Activated naive CD4-positive, alpha-beta T cell treated with anti-CD3 and anti-CD28 coated beads for 36 hours (primary cell): ENCODE measurements at regions of chr18 and their contacts with region 1.

Region 1: DNA sequence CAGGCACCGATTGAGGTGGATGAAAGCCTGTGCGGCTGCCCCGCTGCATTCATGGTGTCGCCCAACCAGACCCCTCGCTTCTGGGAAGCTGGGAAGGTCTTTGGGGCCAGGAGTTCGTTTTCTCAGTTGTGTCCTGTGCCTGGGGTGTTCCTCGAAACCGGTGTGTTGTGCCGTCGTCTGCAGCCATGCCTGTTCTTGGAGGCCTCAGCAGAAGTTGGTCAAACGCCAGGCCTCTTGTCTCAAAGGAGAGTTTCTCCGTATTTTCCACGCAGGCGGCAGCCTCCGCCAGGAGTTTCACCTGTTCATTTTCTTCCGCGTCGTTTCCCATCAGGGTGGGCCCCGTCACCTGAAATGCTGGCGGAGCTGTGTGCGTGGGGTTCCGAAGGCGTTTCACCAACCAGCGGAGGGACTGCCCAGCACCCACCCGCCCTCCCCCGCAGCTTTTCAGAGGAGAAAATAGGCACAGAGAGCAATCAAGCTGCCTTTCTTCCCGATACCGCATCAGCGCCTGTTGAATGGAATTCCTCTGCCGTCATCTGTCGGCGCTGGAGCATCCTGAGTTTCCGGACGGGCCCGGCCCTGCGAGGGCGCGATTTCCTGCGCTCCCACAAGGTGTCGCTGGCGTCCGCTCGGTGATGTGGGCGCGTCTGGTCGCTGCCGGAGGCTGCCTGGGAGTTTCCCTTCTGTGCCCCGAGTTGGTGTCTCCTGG is 17.0 kb upstream of the NFATC1 start:
- DNase-seq: peak; percentile 91
- H3K4me3 Mint-ChIP-seq: no peak overlapping the region
- H3K27ac Mint-ChIP-seq: no peak overlapping the region
- H3K4me1 Mint-ChIP-seq: peaks cover 9% of the 10 kb centered on the region
- H3K27me3 Mint-ChIP-seq: no peaks in the 10 kb centered on the region

Region 2: DNA sequence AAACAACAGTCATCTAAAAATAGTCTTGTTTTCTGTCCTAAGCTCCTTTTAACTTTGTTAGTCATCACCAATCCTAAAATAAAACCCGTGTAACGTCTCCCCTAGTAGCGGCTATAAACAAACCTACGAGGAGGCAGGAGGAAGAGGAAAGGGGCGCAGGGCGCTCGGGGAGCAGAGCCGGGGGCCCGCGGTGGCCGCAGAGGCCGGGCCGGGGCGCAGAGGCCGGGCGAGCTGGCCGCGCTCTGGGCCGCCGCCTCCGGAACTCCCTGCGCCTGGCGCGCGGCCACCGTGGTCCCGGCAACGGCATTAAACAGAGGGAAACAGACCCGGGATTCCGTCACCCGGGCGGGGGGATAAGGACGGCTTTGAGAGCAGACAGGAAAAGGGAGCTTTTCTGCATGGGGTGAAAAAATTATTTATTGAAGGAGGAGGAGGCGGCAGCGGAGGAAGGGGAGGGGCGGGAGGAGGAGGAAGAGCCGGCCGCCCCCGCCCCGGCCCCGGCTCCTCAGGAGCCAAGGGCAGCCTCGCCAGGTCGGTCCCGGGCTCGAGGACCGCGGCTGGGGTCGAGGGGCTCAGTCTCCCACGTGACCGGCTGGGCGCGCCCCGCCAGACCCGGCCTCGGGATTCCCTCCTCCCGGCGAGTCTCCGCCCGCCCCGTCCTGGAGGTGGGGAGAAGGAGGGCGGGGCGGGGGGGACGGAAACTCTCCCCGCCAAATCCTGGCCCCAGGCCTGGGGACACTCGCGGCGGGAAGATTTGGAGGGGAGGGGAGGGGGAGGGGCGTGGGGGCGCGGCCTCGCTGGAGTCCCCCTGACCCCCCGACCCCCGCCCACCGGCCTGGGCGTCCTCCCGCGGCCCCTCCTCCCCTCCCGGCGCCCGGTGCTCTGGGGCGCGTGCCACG is 15.2 kb after region 1 on chr18:
- CTCF ChIA-PET with region 1: interaction called, 57 read pairs
- intact Hi-C with region 1: loop called (anchors 1 kb)
- DNase-seq: peak; percentile 73
- H3K4me3 Mint-ChIP-seq: peak overlapping the region; percentile 74
- H3K27ac Mint-ChIP-seq: peak overlapping the region; percentile 71
- H3K4me1 Mint-ChIP-seq: peaks cover 34% of the 10 kb centered on the region
- H3K27me3 Mint-ChIP-seq: peaks cover 5% of the 10 kb centered on the region

Region 3: DNA sequence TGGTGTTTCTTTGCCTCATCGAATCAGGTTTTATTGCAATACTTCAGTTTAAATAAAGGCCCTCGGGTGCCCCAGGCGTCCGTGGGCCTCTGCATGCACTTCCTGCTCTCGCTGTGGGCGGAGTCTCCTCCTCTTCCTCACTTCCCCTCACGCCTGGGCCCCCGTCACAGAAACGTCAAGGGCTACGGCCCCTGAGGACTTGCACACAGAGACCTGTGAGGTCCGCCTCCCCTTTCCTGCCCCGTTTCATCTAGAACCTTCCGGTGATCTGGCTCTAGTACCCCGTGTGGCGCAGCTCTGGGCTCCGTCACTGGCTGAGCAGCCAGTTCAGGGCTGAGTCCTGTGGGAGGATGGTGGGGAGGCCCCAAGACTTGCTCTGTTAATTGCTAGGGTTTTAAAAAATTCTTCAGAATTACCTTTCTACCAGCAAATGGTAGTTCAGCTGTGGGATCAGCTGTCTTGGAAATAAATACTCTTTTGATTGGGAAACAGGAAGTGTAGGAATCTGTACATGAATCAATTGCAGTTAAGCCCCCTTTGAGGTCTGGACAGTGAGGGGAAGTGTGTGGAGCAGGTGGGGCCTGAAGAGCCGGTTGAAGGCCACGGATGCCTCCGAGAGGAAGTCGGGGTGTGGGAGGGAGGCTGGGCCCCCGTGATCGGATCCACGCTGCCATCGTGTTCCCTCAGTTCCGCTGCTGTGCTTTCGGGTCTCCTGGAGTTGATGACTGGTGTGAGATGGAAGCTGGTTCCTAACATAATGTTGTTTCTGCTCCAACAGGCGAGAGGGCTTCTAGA is 27.3 kb after region 1 on chr18:
- CTCF ChIA-PET with region 1: interaction called, 11 read pairs
- intact Hi-C with region 1: no loop called
- DNase-seq: peak; percentile 96
- H3K4me3 Mint-ChIP-seq: peak overlapping the region; percentile 81
- H3K27ac Mint-ChIP-seq: peak overlapping the region; percentile 94
- H3K4me1 Mint-ChIP-seq: peaks cover 63% of the 10 kb centered on the region
- H3K27me3 Mint-ChIP-seq: no peaks in the 10 kb centered on the region

Region 4: DNA sequence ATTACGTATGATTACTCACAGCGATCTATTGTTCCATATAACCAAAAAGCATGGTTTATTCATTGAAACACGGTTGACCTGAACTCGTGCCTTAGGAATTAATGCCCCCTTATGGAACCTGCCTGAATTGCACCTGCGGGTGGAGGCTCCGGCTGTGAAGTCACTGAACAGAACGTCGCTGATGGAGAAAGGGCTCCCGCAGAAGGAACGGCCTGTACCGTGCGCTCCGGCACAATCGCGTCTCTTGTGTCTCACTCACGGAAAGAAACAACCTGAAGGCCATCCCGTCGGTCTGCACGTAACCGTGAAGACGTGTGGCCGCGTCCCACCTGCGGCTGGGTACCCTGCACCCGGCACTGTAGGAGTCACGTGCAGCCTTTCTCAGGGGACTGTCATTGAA is 150.2 kb after region 1 on chr18:
- CTCF ChIA-PET with region 1: interaction called, 89 read pairs
- intact Hi-C with region 1: loop called (anchors 1 kb)
- DNase-seq: peak; percentile 90
- H3K4me3 Mint-ChIP-seq: no peak overlapping the region
- H3K27ac Mint-ChIP-seq: no peak overlapping the region
- H3K4me1 Mint-ChIP-seq: peaks cover 32% of the 10 kb centered on the region
- H3K27me3 Mint-ChIP-seq: no peaks in the 10 kb centered on the region

Region 5: GRCh38 chr18:79644006-79644665 is 265.4 kb after region 1 on chr18:
- CTCF ChIA-PET with region 1: interaction called, 63 read pairs
- intact Hi-C with region 1: loop called (anchors 1 kb)
- DNase-seq: peak; percentile 78
- H3K4me3 Mint-ChIP-seq: no peak overlapping the region
- H3K27ac Mint-ChIP-seq: no peak overlapping the region
- H3K4me1 Mint-ChIP-seq: peaks cover 4% of the 10 kb centered on the region
- H3K27me3 Mint-ChIP-seq: peaks cover 9% of the 10 kb centered on the region